PC-3 (cell line): ENCODE measurements at regions of chr19 and their contacts with region 1.

Region 1: GRCh38 chr19:831407-832369 is 4.1 kb downstream of the AZU1 start:
- DNase-seq: no peak
- ATAC-seq: no peak
- H3K4me3 ChIP-seq: no peak overlapping the region
- H3K27ac ChIP-seq: no peak overlapping the region
- H3K4me1 ChIP-seq: no peaks in the 10 kb centered on the region
- H3K27me3 ChIP-seq: no peaks in the 10 kb centered on the region
- CTCF ChIP-seq: no peak

Region 2: GRCh38 chr19:752652-753517 is 78.8 kb before region 1 on chr19:
- CTCF ChIA-PET with region 1: no interaction called
- POLR2A ChIA-PET with region 1: no interaction called
- intact Hi-C with region 1: no loop called
- DNase-seq: peak; percentile 94
- ATAC-seq: peak; percentile 75
- H3K4me3 ChIP-seq: peak overlapping the region; percentile 61
- H3K27ac ChIP-seq: peak overlapping the region; percentile 98
- H3K4me1 ChIP-seq: peaks cover 16% of the 10 kb centered on the region
- H3K27me3 ChIP-seq: no peaks in the 10 kb centered on the region
- CTCF ChIP-seq: no peak

Region 3: GRCh38 chr19:771332-771785 is 60.3 kb before region 1 on chr19:
- CTCF ChIA-PET with region 1: no interaction called
- POLR2A ChIA-PET with region 1: no interaction called
- intact Hi-C with region 1: loop called (anchors 2 kb)
- DNase-seq: peak; percentile 50
- ATAC-seq: peak; percentile 59
- H3K4me3 ChIP-seq: no peak overlapping the region
- H3K27ac ChIP-seq: no peak overlapping the region
- H3K4me1 ChIP-seq: no peaks in the 10 kb centered on the region
- H3K27me3 ChIP-seq: no peaks in the 10 kb centered on the region
- CTCF ChIP-seq: peak; percentile 36

Region 4: GRCh38 chr19:862581-863314 is 31.1 kb after region 1 on chr19:
- CTCF ChIA-PET with region 1: no interaction called
- POLR2A ChIA-PET with region 1: no interaction called
- intact Hi-C with region 1: no loop called
- DNase-seq: no peak
- ATAC-seq: peak; percentile 12
- H3K4me3 ChIP-seq: no peak overlapping the region
- H3K27ac ChIP-seq: no peak overlapping the region
- H3K4me1 ChIP-seq: no peaks in the 10 kb centered on the region
- H3K27me3 ChIP-seq: no peaks in the 10 kb centered on the region
- CTCF ChIP-seq: no peak